Mammary epithelial cell (primary cell): ENCODE measurements at regions of chrX and their contacts with region 1.

Region 1: DNA sequence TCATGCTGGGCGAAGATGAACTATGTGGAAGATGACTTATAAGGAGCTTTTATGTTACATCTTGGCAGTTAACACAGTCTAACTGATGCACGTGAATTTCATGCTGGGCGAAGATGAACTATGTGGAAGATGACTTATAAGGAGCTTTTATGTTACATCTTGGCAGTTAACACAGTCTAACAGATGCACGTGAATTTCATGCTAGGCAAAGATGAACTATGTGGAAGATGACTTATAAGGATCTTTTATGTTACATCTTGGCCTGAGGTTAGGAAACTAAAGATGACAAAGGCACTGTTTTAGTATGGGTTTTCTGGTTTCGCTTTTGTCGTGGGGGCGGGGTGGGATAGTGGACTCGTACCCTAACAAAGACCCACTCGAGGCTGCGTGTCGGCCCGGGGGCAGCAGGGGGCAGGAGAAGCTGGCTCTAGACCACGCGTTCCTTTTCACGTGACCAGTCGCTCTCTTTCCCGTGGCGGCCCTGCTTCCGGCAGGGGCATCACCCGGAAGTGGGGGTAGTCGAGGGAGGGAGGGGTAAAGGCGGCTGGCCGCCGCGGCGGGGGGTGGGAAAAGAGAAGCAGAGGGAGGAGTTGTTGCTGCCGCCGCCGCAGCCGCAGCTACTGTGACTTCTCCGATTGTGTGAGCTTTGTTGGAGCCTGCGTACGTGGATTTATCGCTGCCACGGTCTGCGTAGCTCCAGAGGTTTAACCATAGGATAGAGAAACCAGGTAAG is at the start of gene ATP7A:
- DNase-seq: peak; percentile 74
- H3K4me3 ChIP-seq: peak within 1 kb of the TSS; percentile 51 to 60 (median 55)
- H3K27ac ChIP-seq: peak within 1 kb of the TSS; percentile 44
- H3K4me1 ChIP-seq: no peaks in the 10 kb centered on the region
- H3K27me3 ChIP-seq: no peaks in the 10 kb centered on the region
- CTCF ChIP-seq: peak; percentile 23 to 57
- total RNA-seq, gene ATP7A: 5.5 to 8.3 TPM

Region 2: GRCh38 chrX:77802201-77802600 is 108.1 kb before region 1 on chrX:
- CTCF ChIA-PET with region 1: no interaction called
- dilution Hi-C with region 1: no loop called
- in situ Hi-C with region 1: no loop called
- intact Hi-C with region 1: no loop called
- DNase-seq: no peak
- H3K4me3 ChIP-seq: no peak overlapping the region
- H3K27ac ChIP-seq: no peak overlapping the region
- H3K4me1 ChIP-seq: no peaks in the 10 kb centered on the region
- H3K27me3 ChIP-seq: no peaks in the 10 kb centered on the region
- CTCF ChIP-seq: no peak

Region 3: DNA sequence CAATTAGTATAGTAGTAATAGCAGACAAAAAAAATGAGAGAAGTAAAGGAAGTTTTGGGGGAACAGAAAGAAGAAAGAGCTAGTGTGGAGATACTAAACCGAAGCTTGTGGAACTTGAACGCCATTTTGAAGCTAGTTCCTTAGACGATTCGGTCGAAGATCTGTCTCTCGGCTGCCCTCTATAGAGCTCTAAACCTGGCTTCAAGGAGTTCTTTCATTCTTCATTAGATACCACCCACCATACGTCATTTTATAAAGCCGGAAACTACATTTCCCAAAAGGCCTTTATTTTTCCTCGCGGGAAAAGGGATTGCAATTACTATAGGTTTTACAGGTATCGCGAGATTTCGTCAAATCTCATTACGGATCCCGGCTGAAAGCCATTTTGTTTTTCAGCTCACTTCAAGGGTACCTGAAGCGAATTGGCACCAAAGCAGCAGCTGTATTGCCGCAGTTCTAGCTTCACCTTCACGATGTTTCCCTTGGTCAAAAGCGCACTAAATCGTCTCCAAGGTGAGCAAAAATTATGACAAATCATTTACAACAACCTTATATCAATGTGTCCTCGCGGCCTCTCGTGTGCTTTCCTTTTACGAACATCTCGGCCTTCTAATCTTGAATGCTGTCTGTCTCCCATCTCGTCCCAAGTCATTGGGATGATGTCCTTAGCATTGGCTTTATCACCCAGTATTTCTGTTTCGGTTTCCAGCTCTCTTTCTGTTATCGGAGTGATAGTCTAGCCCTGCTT is 11.0 kb before region 1 on chrX and contains the start of gene COX7B:
- CTCF ChIA-PET with region 1: no interaction called
- dilution Hi-C with region 1: no loop called
- in situ Hi-C with region 1: no loop called
- intact Hi-C with region 1: no loop called
- DNase-seq: peak; percentile 91
- H3K4me3 ChIP-seq: peak within 1 kb of the TSS; percentile 44 to 69 (median 55)
- H3K27ac ChIP-seq: peak within 1 kb of the TSS; percentile 85
- H3K4me1 ChIP-seq: no peaks in the 10 kb centered on the region
- H3K27me3 ChIP-seq: no peaks in the 10 kb centered on the region
- CTCF ChIP-seq: peak; percentile 27 to 46
- total RNA-seq, gene COX7B: 190 to 194 TPM

Region 4: GRCh38 chrX:78103623-78104446 is 193.6 kb after region 1 on chrX and contains the start of gene PGK1:
- CTCF ChIA-PET with region 1: no interaction called
- dilution Hi-C with region 1: no loop called
- in situ Hi-C with region 1: loop called in 1 of 2 experiments (anchors 10 kb)
- intact Hi-C with region 1: no loop called
- DNase-seq: peak; percentile 94
- H3K4me3 ChIP-seq: peak within 1 kb of the TSS; percentile 62 to 71 (median 64)
- H3K27ac ChIP-seq: peak within 1 kb of the TSS; percentile 87
- H3K4me1 ChIP-seq: no peaks in the 10 kb centered on the region
- H3K27me3 ChIP-seq: no peaks in the 10 kb centered on the region
- CTCF ChIP-seq: no peak
- total RNA-seq, gene PGK1: 241 to 701 TPM

Region 5: GRCh38 chrX:78303086-78303485 is 392.8 kb after region 1 on chrX:
- CTCF ChIA-PET with region 1: no interaction called
- dilution Hi-C with region 1: no loop called
- in situ Hi-C with region 1: no loop called
- intact Hi-C with region 1: no loop called
- DNase-seq: no peak
- H3K4me3 ChIP-seq: no peak overlapping the region
- H3K27ac ChIP-seq: no peak overlapping the region
- H3K4me1 ChIP-seq: no peaks in the 10 kb centered on the region
- H3K27me3 ChIP-seq: no peaks in the 10 kb centered on the region
- CTCF ChIP-seq: no peak